ENCODE measurements at regions of chr1 and their contacts with region 1.

Region 1: GRCh38 chr1:151993654-151994496 is at the start of gene S100A10:
- DNase-seq: peak; percentile 90
- total RNA-seq, gene S100A10: 131 TPM

Region 2: DNA sequence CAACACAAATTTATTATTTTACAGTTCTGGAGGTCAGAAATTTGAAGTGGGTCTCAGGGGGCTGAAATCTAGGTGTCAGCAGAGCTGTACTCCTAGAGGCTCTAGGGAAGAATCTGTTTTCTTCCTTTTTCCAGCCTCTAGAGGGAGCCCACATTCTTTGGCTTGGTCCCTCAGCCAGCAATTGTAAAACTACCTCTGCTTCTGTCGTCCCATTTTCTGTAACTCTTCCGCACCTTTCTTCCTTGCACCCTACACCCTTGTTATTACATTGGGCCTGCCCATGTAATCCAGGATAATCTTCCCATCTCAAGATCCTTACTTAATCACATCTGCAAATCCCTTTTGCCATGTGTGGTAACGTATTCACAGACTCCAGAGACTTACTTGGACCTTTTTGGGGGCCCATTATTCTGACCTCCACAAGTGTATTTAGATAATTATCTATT is 59.8 kb before region 1 on chr1:
- intact Hi-C with region 1: loop called (anchors 1 kb)
- DNase-seq: no peak

Region 3: DNA sequence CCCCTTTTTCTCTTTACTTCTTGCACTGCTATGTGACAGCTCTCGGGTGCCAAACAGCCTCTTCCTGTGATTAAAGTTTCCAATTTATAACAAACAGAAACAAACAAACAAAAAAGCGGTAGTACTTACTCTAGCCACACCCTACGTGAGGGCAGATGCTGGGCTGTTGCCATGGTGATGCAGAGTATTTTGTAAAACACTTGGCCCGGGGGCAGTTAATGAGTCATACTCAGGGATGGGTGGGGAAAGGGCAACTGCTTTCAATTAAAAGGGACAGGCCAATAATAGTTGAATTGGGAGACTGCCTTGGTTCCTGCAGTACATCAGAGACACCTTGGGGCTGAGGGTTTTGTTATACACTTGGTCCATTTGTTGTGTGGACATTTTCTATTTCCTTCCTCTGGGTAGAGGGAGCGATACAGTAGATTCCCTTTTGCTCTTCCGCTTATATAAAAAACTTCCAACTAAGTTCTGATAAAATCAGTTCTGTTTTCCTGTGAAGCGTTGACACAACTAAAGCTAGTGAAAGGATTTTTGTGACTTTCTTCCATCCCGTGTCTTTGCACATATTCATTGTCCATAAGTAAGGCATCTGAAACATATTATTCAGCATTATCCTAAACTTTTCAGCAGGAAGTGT is 48.0 kb before region 1 on chr1:
- intact Hi-C with region 1: loop called (anchors 1 kb)
- DNase-seq: peak; percentile 88

Region 4: GRCh38 chr1:151968058-151968457 is 25.8 kb before region 1 on chr1:
- intact Hi-C with region 1: loop called (anchors 2 kb)
- DNase-seq: no peak

Region 5: GRCh38 chr1:152034646-152035405 is 41.0 kb after region 1 on chr1:
- intact Hi-C with region 1: loop called (anchors 2 kb)
- DNase-seq: no peak